Mammary epithelial cell (primary cell): ENCODE measurements at regions of chr1 and their contacts with region 1.

Region 1: DNA sequence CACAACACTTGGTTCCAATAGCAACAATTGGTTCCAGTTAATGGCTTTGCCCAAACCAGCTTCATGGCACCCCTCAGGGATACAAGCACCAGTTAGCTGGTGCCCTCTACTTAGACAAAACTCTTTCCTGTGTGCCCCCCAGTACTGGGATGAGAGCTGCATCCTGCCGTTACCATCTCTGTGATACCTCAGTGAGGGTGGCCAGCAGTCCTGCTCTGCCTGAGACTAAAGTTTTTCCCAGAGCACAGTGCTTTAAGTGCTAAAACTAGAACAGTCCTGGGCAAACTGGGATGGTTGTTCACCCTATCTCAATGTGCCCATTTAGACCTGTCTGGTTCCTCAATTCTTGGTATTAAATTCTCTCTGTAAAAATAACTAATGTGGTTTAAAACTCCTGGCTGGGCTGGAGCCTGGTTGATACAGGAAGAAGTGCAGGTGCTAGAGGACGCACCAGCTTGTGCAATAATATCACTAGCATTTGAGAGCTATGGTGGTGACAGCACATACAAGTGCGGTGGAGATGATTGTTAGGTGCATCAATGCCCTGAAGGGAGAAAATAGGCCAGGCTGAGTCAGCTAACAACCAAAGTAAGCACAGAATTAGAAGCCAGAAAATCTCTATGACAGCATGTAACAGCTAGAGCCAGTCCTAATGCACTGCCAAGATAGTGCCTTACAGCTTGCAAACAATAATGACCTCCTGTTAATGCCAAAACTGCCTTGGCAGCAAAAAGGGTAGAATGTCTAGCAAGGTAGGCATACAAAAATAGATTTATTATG is 179.8 kb upstream of the GALNT2 start:
- DNase-seq: peak; percentile 97
- H3K4me3 ChIP-seq: no peak overlapping the region
- H3K27ac ChIP-seq: no peak overlapping the region
- H3K4me1 ChIP-seq: peaks cover 19% of the 10 kb centered on the region
- H3K27me3 ChIP-seq: peaks cover 10% of the 10 kb centered on the region
- CTCF ChIP-seq: no peak

Region 2: GRCh38 chr1:229781453-229781852 is 105.8 kb before region 1 on chr1:
- CTCF ChIA-PET with region 1: no interaction called
- dilution Hi-C with region 1: loop called (anchors 5 kb)
- in situ Hi-C with region 1: no loop called
- intact Hi-C with region 1: no loop called
- DNase-seq: no peak
- H3K4me3 ChIP-seq: no peak overlapping the region
- H3K27ac ChIP-seq: no peak overlapping the region
- H3K4me1 ChIP-seq: no peaks in the 10 kb centered on the region
- H3K27me3 ChIP-seq: no peaks in the 10 kb centered on the region
- CTCF ChIP-seq: peak in 1 of 2 donors; percentile 53

Region 3: GRCh38 chr1:229920683-229921082 is 33.5 kb after region 1 on chr1:
- CTCF ChIA-PET with region 1: no interaction called
- dilution Hi-C with region 1: no loop called
- in situ Hi-C with region 1: no loop called
- intact Hi-C with region 1: no loop called
- DNase-seq: no peak
- H3K4me3 ChIP-seq: no peak overlapping the region
- H3K27ac ChIP-seq: no peak overlapping the region
- H3K4me1 ChIP-seq: no peaks in the 10 kb centered on the region
- H3K27me3 ChIP-seq: peaks cover 2% of the 10 kb centered on the region
- CTCF ChIP-seq: no peak

Region 4: DNA sequence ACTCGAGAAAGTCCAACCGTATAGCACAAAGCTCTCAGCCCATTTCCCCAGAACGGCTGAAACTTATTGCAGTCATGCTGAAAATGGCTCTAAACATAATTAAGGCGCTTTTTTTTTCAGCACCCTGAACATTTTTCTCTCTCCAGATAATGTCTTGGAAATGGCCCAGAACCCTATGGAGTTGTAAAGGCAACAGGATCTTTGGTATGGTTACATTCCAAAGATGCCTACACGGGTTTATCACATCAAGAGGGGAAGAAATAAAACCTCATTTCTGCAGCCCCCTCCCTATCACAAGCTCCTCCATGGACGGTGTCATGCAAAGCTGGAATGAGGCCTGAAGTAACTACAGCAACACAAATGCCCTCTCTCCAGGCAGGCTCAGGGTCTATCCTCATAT is 53.5 kb after region 1 on chr1:
- CTCF ChIA-PET with region 1: no interaction called
- dilution Hi-C with region 1: loop called (anchors 10 kb)
- in situ Hi-C with region 1: no loop called
- intact Hi-C with region 1: no loop called
- DNase-seq: no peak
- H3K4me3 ChIP-seq: no peak overlapping the region
- H3K27ac ChIP-seq: no peak overlapping the region
- H3K4me1 ChIP-seq: no peaks in the 10 kb centered on the region
- H3K27me3 ChIP-seq: peaks cover 6% of the 10 kb centered on the region
- CTCF ChIP-seq: no peak

Region 5: GRCh38 chr1:229999004-229999670 is 111.9 kb after region 1 on chr1:
- CTCF ChIA-PET with region 1: no interaction called
- dilution Hi-C with region 1: no loop called
- in situ Hi-C with region 1: loop called in 1 of 2 experiments (anchors 25 kb)
- intact Hi-C with region 1: no loop called
- DNase-seq: no peak
- H3K4me3 ChIP-seq: no peak overlapping the region
- H3K27ac ChIP-seq: no peak overlapping the region
- H3K4me1 ChIP-seq: peaks cover 9% of the 10 kb centered on the region
- H3K27me3 ChIP-seq: no peaks in the 10 kb centered on the region
- CTCF ChIP-seq: no peak

Region 6: DNA sequence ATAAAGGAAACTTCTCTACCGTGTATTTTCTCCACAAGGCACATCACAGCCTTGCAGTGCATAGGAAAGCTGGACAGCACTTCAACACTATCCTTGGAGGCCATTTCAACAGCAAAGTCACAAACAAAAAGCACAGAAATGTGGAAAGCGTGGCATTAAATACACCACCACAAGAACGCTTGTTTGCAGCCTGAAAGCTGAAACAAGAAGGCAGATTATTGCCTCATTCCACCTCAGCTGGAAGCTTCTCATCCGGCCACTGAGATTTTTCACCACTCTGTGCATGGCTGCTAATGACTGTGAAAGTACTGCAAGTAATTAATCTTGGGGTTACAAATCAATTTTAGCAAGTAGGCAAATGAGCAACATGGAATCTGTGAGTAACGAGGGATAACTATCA is 128.9 kb after region 1 on chr1:
- CTCF ChIA-PET with region 1: no interaction called
- dilution Hi-C with region 1: no loop called
- in situ Hi-C with region 1: no loop called
- intact Hi-C with region 1: no loop called
- DNase-seq: no peak
- H3K4me3 ChIP-seq: no peak overlapping the region
- H3K27ac ChIP-seq: no peak overlapping the region
- H3K4me1 ChIP-seq: no peaks in the 10 kb centered on the region
- H3K27me3 ChIP-seq: no peaks in the 10 kb centered on the region
- CTCF ChIP-seq: no peak

Region 7: GRCh38 chr1:230031131-230031530 is 143.9 kb after region 1 on chr1:
- CTCF ChIA-PET with region 1: no interaction called
- dilution Hi-C with region 1: no loop called
- in situ Hi-C with region 1: no loop called
- intact Hi-C with region 1: no loop called
- DNase-seq: peak; percentile 68
- H3K4me3 ChIP-seq: no peak overlapping the region
- H3K27ac ChIP-seq: no peak overlapping the region
- H3K4me1 ChIP-seq: peaks cover 4% of the 10 kb centered on the region
- H3K27me3 ChIP-seq: no peaks in the 10 kb centered on the region
- CTCF ChIP-seq: no peak